Activated CD4-positive, alpha-beta memory T cell treated with anti-CD3 and anti-CD28 coated beads for 36 hours (primary cell): ENCODE measurements at regions of chr19 and their contacts with region 1.

Region 1: DNA sequence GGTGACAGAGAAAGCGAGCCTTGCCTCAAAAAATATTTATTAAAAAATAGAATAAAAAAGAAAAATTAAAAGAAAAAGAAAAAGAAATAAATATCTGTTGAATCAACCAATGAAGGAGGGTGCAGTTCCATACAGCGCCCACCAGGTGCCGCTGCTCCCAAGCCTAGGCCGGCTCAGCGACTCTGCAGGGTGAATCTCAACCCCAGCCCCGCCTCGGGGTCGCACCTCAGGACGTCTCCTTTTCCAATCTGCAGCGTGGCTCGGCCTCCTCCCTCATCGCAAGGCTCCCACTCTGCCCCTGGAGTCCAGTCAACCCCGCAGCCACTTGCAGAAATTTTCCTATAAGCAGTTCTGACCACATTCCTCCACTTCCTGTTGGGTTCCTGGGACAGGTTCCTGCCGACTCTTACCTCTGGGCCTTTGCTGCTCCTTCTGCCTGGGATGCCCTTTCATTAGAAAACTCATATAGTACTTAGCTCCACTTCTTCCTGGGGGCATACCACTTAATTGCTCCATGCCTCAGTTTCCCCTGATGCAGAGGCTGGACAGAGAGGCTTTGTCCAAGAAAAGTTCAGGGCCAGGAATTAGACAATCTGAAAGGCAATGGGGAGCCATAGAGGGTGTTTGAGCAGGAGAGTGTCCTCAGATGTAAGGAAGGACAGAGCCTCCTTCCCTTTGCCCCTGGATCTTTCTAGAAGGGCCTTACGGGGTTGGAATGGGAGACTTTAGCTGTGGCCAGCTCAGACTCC is 24.3 kb downstream of the NFILZ start:
- DNase-seq: peak; percentile 72
- H3K4me3 Mint-ChIP-seq: peak overlapping the region; percentile 25
- H3K27ac Mint-ChIP-seq: no peak overlapping the region
- H3K4me1 Mint-ChIP-seq: peaks cover 14% of the 10 kb centered on the region
- H3K27me3 Mint-ChIP-seq: no peaks in the 10 kb centered on the region

Region 2: GRCh38 chr19:8257052-8257443 is 397.7 kb before region 1 on chr19:
- CTCF ChIA-PET with region 1: no interaction called
- POLR2A ChIA-PET with region 1: no interaction called
- intact Hi-C with region 1: no loop called
- DNase-seq: no peak
- H3K4me3 Mint-ChIP-seq: no peak overlapping the region
- H3K27ac Mint-ChIP-seq: no peak overlapping the region
- H3K4me1 Mint-ChIP-seq: no peaks in the 10 kb centered on the region
- H3K27me3 Mint-ChIP-seq: no peaks in the 10 kb centered on the region

Region 3: DNA sequence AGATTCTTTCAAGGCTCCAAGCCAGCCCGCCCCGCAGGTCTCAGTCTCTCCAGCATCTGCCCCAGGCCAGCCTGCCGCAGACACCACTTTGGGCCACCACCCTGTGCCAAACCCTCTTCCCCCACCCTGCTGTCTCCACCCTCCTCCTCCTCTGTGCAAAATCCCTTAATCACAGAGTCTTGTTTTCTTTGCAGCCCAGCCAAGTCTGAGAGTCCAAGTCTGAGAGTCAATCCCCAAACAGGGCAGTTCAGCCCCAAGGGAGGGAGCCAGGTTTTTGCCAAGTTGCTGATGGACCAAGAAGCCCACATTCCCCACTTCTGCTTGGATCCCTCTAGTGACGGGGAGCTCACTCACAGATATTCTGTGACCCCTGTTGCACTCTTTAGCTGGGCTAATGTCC is 47.4 kb before region 1 on chr19:
- CTCF ChIA-PET with region 1: no interaction called
- POLR2A ChIA-PET with region 1: no interaction called
- intact Hi-C with region 1: no loop called
- DNase-seq: no peak
- H3K4me3 Mint-ChIP-seq: no peak overlapping the region
- H3K27ac Mint-ChIP-seq: no peak overlapping the region
- H3K4me1 Mint-ChIP-seq: peaks cover 19% of the 10 kb centered on the region
- H3K27me3 Mint-ChIP-seq: peaks cover 3% of the 10 kb centered on the region

Region 4: DNA sequence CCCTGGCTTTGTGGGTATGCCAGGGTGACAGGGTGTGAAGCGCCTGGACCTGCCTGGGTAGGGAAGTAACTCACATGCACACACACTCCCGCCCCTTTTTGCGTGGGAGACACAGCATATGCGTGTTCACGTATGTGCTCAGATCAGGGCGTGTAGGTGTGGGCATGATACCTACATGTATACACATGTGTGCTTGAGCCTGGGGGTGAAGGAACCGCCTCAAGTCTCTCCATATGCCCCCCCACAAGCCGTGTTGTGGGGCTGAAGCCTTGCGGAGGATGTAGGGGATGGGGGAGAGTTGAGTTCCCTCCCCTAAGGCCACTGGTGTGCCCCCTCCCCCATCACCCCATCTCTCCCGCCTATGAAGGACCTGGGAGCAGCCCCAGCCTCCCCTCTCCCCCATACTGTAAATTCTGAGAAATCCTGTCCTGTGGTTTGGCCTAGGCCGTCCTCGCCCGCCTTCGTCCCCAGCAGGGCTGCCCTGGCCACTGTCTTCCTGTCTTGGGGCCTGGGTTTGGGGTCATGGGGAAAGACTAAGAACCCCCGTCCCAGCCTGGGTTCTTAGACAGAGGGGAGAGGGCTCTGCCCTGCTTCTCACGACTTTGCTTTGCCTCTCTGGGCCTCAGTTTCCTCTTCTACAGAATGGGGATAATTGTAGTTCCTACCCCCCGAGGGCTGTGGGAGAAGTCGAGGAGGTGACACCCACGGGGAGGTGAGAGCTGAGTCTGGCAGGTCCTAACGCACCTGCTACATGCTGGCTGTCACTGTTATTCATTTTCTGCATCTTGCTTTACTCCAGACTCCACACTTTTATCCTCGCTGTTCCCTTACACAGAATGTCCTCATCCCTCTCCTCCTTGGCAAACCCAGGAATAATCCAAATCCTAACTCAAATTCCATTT is 29.5 kb after region 1 on chr19:
- CTCF ChIA-PET with region 1: interaction called, 173 read pairs
- POLR2A ChIA-PET with region 1: no interaction called
- intact Hi-C with region 1: no loop called
- DNase-seq: peak; percentile 5
- H3K4me3 Mint-ChIP-seq: no peak overlapping the region
- H3K27ac Mint-ChIP-seq: no peak overlapping the region
- H3K4me1 Mint-ChIP-seq: peaks cover 14% of the 10 kb centered on the region
- H3K27me3 Mint-ChIP-seq: no peaks in the 10 kb centered on the region

Region 5: DNA sequence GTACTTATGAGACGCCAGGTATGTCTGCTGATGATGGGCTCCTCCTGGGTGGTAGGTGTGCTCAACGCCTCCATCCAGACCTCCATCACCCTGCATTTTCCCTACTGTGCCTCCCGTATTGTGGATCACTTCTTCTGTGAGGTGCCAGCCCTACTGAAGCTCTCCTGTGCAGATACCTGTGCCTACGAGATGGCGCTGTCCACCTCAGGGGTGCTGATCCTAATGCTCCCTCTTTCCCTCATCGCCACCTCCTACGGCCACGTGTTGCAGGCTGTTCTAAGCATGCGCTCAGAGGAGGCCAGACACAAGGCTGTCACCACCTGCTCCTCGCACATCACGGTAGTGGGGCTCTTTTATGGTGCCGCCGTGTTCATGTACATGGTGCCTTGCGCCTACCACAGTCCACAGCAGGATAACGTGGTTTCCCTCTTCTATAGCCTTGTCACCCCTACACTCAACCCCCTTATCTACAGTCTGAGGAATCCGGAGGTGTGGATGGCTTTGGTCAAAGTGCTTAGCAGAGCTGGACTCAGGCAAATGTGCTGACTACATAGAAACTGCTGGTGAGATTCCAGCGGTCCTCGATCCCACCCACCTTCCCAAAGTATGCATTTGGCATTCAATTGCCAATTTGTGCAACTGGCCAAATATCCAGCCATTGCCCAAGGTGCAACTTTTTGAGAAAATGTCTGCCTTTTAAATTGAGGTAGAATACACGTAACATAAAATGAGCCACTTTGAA is 76.8 kb after region 1 on chr19:
- CTCF ChIA-PET with region 1: no interaction called
- POLR2A ChIA-PET with region 1: no interaction called
- intact Hi-C with region 1: no loop called
- DNase-seq: peak; percentile 25
- H3K4me3 Mint-ChIP-seq: no peak overlapping the region
- H3K27ac Mint-ChIP-seq: no peak overlapping the region
- H3K4me1 Mint-ChIP-seq: no peaks in the 10 kb centered on the region
- H3K27me3 Mint-ChIP-seq: peaks cover 1% of the 10 kb centered on the region

Region 6: GRCh38 chr19:9086761-9087160 is 432.0 kb after region 1 on chr19 and contains the start of gene OR1M1:
- CTCF ChIA-PET with region 1: no interaction called
- POLR2A ChIA-PET with region 1: no interaction called
- intact Hi-C with region 1: loop called (anchors 10 kb)
- DNase-seq: no peak
- H3K4me3 Mint-ChIP-seq: no peak within 1 kb of the TSS
- H3K27ac Mint-ChIP-seq: no peak within 1 kb of the TSS
- H3K4me1 Mint-ChIP-seq: no peaks in the 10 kb centered on the region
- H3K27me3 Mint-ChIP-seq: peaks cover 15% of the 10 kb centered on the region
- total RNA-seq, gene OR1M1: not detected